ENCODE measurements at regions of chr1 and their contacts with region 1.

Region 1: GRCh38 chr1:193183019-193183627 is 3.3 kb downstream of the B3GALT2 start:
- DNase-seq: peak; percentile 69
- ATAC-seq: peak; percentile 48; the same call in 1 of the 2 replicates
- H3K4me3 ChIP-seq: no peak overlapping the region
- H3K27ac ChIP-seq: no peak overlapping the region
- H3K4me1 ChIP-seq: no peaks in the 10 kb centered on the region
- H3K27me3 ChIP-seq: no peaks in the 10 kb centered on the region
- CTCF ChIP-seq: peak; percentile 70

Region 2: DNA sequence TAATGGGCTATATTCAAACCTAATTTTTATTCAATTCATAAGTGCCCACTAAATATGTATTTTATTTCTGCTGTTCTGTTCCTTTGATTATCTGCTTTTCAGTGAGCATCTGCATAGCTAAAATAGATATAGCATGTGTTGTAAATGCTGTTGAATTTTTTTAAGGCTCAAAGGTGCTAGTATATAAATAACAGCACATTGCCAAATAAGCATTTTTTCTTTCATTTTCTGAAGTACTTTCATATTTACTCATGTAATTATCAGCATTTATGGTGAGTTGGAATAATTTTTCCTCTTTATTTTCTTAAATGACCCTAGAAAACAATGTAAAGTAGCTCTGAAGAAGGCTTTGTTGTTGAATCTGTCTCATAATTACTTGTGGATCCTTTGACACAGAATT is 72.9 kb after region 1 on chr1:
- CTCF ChIA-PET with region 1: no interaction called
- POLR2A ChIA-PET with region 1: no interaction called
- intact Hi-C with region 1: loop called (anchors 5 kb)
- DNase-seq: no peak
- ATAC-seq: no peak
- H3K4me3 ChIP-seq: no peak overlapping the region
- H3K27ac ChIP-seq: no peak overlapping the region
- H3K4me1 ChIP-seq: no peaks in the 10 kb centered on the region
- H3K27me3 ChIP-seq: no peaks in the 10 kb centered on the region
- CTCF ChIP-seq: no peak

Region 3: GRCh38 chr1:193486671-193487229 is 303.6 kb after region 1 on chr1:
- CTCF ChIA-PET with region 1: no interaction called
- POLR2A ChIA-PET with region 1: no interaction called
- intact Hi-C with region 1: no loop called
- DNase-seq: no peak
- ATAC-seq: no peak
- H3K4me3 ChIP-seq: no peak overlapping the region
- H3K27ac ChIP-seq: no peak overlapping the region
- H3K4me1 ChIP-seq: no peaks in the 10 kb centered on the region
- H3K27me3 ChIP-seq: no peaks in the 10 kb centered on the region
- CTCF ChIP-seq: no peak

Region 4: DNA sequence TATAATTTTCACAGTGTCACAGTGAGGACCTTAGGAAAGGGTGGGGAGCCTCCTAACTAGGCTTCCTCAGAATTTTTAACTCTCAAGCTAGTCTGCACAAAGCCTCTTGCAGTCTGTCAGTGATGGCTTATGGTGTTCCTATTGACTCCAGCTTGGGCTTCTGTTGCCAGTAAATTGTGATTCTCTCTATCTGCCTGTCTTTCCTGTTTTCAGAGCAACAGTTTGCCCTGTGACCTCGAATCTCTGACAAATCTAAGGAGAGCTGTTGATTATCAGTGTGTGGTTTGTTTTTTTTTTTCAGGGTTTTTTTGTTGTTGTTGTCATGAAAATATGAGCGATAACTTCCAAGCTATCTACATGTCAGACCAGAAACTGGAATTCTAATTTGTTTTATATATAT is 426.5 kb after region 1 on chr1:
- CTCF ChIA-PET with region 1: no interaction called
- POLR2A ChIA-PET with region 1: no interaction called
- intact Hi-C with region 1: loop called (anchors 10 kb)
- DNase-seq: no peak
- ATAC-seq: no peak
- H3K4me3 ChIP-seq: no peak overlapping the region
- H3K27ac ChIP-seq: no peak overlapping the region
- H3K4me1 ChIP-seq: peaks cover 2% of the 10 kb centered on the region; the same call in 1 of the 2 replicates
- H3K27me3 ChIP-seq: no peaks in the 10 kb centered on the region
- CTCF ChIP-seq: no peak

Region 5: DNA sequence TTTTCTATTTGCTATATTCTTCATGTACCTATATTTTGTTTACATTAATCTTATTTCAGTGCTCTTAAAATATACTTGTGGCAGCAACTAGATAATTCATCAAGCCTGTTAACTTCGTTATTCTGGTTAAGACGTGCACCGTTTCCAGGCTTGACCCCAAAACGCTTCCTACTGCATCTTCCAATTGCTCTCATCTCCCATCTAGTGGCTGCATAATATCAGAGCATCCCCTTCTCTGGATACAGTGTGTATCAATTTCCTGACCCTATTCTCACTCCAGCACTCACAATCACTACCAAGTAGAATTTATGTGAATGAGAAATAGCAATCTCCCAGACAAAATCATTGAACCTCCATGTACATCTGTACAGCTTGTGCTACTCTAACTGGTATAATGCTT is 1283.6 kb after region 1 on chr1:
- CTCF ChIA-PET with region 1: no interaction called
- POLR2A ChIA-PET with region 1: no interaction called
- intact Hi-C with region 1: no loop called
- DNase-seq: peak; percentile 22
- ATAC-seq: peak; percentile 53; the same call in 1 of the 2 replicates
- H3K4me3 ChIP-seq: no peak overlapping the region
- H3K27ac ChIP-seq: no peak overlapping the region
- H3K4me1 ChIP-seq: no peaks in the 10 kb centered on the region
- H3K27me3 ChIP-seq: no peaks in the 10 kb centered on the region
- CTCF ChIP-seq: peak; percentile 53

Measured in PC-3 (cell line).